HepG2 (cell line): ENCODE measurements at regions of chr12 and their contacts with region 1.

Region 1: DNA sequence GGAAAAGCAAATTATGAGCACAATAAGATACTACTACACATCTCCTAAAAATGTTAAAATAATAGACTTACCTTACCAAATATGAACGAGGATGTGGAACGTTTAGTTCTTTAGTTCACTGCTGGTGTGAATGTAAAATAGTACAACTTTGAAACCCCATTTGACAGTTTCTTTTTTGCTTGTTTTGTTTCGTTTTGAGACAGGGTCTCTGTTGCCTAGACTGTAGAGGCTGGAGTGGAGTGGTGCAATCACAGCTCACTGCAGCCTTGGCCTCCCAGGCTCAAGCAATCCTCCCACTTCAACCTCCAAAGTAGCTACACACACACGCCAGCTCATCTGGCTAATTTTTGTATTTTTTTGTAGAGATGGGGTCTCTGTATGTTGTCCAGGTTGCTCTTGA is 136.4 kb upstream of the FAR2 start:
- DNase-seq: no peak
- ATAC-seq: no peak
- H3K4me3 ChIP-seq: no peak overlapping the region
- H3K27ac ChIP-seq: no peak overlapping the region
- H3K4me1 ChIP-seq: no peaks in the 10 kb centered on the region
- H3K27me3 ChIP-seq: no peaks in the 10 kb centered on the region
- CTCF ChIP-seq: no peak
- EP300 ChIP-seq: no peak
- POLR2A ChIP-seq: no peak
- RAD21 ChIP-seq: no peak

Region 2: GRCh38 chr12:28987538-28988324 is 24.9 kb before region 1 on chr12:
- CTCF ChIA-PET with region 1: no interaction called
- POLR2A ChIA-PET with region 1: no interaction called
- in situ Hi-C with region 1: no loop called
- intact Hi-C with region 1: loop called (anchors 1 kb)
- DNase-seq: peak; percentile 7
- ATAC-seq: no peak
- H3K4me3 ChIP-seq: no peak overlapping the region
- H3K27ac ChIP-seq: no peak overlapping the region
- H3K4me1 ChIP-seq: no peaks in the 10 kb centered on the region
- H3K27me3 ChIP-seq: no peaks in the 10 kb centered on the region
- CTCF ChIP-seq: no peak
- EP300 ChIP-seq: no peak
- POLR2A ChIP-seq: no peak
- RAD21 ChIP-seq: no peak

Region 3: DNA sequence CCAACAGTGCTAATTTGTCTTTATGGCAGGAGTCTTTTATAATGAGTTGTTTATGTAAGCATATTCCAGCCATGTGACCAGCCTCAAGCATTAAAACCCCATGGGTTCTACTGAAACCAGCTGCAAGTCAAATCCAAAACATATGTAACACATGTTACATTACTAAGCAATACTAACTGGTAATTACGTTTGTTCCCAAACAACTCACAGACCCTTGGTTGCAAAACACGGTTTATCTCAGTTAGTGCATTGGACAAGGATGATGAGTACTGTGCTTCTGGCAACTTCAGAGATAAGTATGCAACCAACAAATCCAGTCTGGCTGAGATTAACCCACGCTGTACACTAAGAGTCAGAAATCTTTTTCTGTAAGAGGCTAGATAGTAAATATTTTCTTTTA is 26.3 kb after region 1 on chr12:
- CTCF ChIA-PET with region 1: no interaction called
- POLR2A ChIA-PET with region 1: no interaction called
- in situ Hi-C with region 1: no loop called
- intact Hi-C with region 1: no loop called
- DNase-seq: no peak
- ATAC-seq: no peak
- H3K4me3 ChIP-seq: no peak overlapping the region
- H3K27ac ChIP-seq: no peak overlapping the region
- H3K4me1 ChIP-seq: no peaks in the 10 kb centered on the region
- H3K27me3 ChIP-seq: no peaks in the 10 kb centered on the region
- CTCF ChIP-seq: no peak
- EP300 ChIP-seq: no peak
- POLR2A ChIP-seq: no peak
- RAD21 ChIP-seq: no peak